GM12878 (cell line): ENCODE measurements at regions of chr7 and their contacts with region 1.

Region 1: GRCh38 chr7:121395961-121396757 is at the start of gene FAM3C:
- DNase-seq: peak; percentile 53
- ATAC-seq: peak; percentile 86
- H3K4me3 ChIP-seq: peak within 1 kb of the TSS; percentile 69
- H3K27ac ChIP-seq: peak within 1 kb of the TSS; percentile 66
- H3K4me1 ChIP-seq: peaks cover 8% of the 10 kb centered on the region
- H3K27me3 ChIP-seq: no peaks in the 10 kb centered on the region
- CTCF ChIP-seq: peak; percentile 66 to 94 (median 80); a peak in 5 of 6 replicates
- EP300 ChIP-seq: no peak; a peak in 1 of 4 replicates
- POLR2A ChIP-seq: peak; percentile 94
- RAD21 ChIP-seq: peak; percentile 77
- polyA plus RNA-seq, gene FAM3C: 11.0 to 13.6 TPM

Region 2: DNA sequence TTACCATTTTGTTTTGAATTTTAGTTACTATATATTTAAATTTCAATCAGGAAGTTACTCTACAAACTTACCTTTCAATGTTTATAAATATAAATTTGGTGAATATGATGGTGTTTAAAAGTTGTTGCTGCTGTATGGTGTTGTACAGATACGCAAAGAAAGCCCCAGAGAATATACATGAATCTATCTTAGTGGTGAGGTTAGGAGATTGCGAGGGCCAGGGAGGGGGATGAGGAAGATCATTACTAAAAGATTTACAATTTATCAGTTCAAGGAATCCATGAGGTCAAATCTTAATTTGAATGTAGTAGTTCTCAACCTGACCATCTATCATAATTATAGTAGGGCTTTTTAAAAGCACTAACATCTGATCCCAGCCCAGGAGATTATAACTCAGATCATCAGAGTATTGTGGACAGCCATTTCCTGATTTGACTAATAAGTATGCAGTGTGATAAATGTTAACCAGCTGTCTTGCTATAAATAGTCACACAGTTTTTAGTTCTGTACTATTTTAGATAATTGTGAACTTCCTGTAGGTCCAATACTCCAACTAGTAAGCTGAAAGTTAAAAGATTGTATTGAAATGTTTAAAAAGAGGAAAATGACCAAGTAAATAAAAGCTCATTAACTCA is 23.7 kb before region 1 on chr7:
- CTCF ChIA-PET with region 1: interaction called, 166 read pairs
- POLR2A ChIA-PET with region 1: interaction called, 52 read pairs
- RAD21 ChIA-PET with region 1: interaction called, 272 read pairs
- SMC1A ChIA-PET with region 1: interaction called, 281 read pairs
- in situ Hi-C with region 1: no loop called
- intact Hi-C with region 1: loop called (anchors 1 kb)
- DNase-seq: peak; percentile 73
- ATAC-seq: peak; percentile 88
- H3K4me3 ChIP-seq: no peak overlapping the region
- H3K27ac ChIP-seq: peak overlapping the region; percentile 58
- H3K4me1 ChIP-seq: peaks cover 32% of the 10 kb centered on the region
- H3K27me3 ChIP-seq: no peaks in the 10 kb centered on the region
- CTCF ChIP-seq: no peak
- EP300 ChIP-seq: peak; percentile 37 to 91; a peak in 3 of 4 replicates
- POLR2A ChIP-seq: no peak
- RAD21 ChIP-seq: 0 out of 2 replicates have a peak, but pooled peaks have one; percentile 6

Region 3: DNA sequence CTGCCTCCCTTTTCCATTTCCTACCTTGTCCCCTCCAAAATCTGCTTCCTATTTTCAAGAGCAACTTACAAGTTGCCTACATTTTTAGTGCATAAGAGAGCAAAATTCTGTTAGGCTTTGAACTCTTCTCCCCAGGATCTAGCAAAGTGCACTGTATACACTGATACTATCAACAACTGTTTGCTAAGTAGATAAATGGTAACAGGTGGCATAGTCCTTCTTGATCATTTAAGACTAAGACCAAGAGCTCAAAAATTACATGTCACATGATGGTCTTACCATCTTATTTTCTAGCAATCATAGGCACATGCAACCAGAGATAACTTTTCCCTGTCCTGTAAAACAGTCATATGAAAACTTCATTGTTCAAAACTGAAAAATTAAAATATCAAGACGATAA is 16.2 kb before region 1 on chr7:
- CTCF ChIA-PET with region 1: interaction called, 87 read pairs
- POLR2A ChIA-PET with region 1: interaction called, 52 read pairs
- RAD21 ChIA-PET with region 1: interaction called, 272 read pairs
- SMC1A ChIA-PET with region 1: interaction called, 281 read pairs
- in situ Hi-C with region 1: no loop called
- intact Hi-C with region 1: no loop called
- DNase-seq: no peak
- ATAC-seq: no peak
- H3K4me3 ChIP-seq: no peak overlapping the region
- H3K27ac ChIP-seq: no peak overlapping the region
- H3K4me1 ChIP-seq: peaks cover 25% of the 10 kb centered on the region
- H3K27me3 ChIP-seq: no peaks in the 10 kb centered on the region
- CTCF ChIP-seq: no peak
- EP300 ChIP-seq: no peak
- POLR2A ChIP-seq: no peak
- RAD21 ChIP-seq: no peak

Region 4: GRCh38 chr7:121385800-121386179 is 10.4 kb before region 1 on chr7:
- CTCF ChIA-PET with region 1: interaction called, 72 read pairs
- POLR2A ChIA-PET with region 1: interaction called, 50 read pairs
- RAD21 ChIA-PET with region 1: interaction called, 115 read pairs
- SMC1A ChIA-PET with region 1: interaction called, 103 read pairs
- in situ Hi-C with region 1: no loop called
- intact Hi-C with region 1: no loop called
- DNase-seq: peak; percentile 76
- ATAC-seq: peak; percentile 79
- H3K4me3 ChIP-seq: no peak overlapping the region
- H3K27ac ChIP-seq: peak overlapping the region; percentile 92
- H3K4me1 ChIP-seq: peaks cover 43% of the 10 kb centered on the region
- H3K27me3 ChIP-seq: no peaks in the 10 kb centered on the region
- CTCF ChIP-seq: no peak
- EP300 ChIP-seq: peak; percentile 87 to 94; a peak in 3 of 4 replicates
- POLR2A ChIP-seq: no peak
- RAD21 ChIP-seq: no peak

Region 5: GRCh38 chr7:121410829-121411596 is 14.9 kb after region 1 on chr7:
- CTCF ChIA-PET with region 1: interaction called, 15 read pairs
- POLR2A ChIA-PET with region 1: interaction called, 4 read pairs
- RAD21 ChIA-PET with region 1: interaction called, 4 read pairs
- SMC1A ChIA-PET with region 1: interaction called, 11 read pairs
- in situ Hi-C with region 1: no loop called
- intact Hi-C with region 1: no loop called
- DNase-seq: no peak
- ATAC-seq: peak; percentile 79
- H3K4me3 ChIP-seq: no peak overlapping the region
- H3K27ac ChIP-seq: no peak overlapping the region
- H3K4me1 ChIP-seq: no peaks in the 10 kb centered on the region
- H3K27me3 ChIP-seq: no peaks in the 10 kb centered on the region
- CTCF ChIP-seq: no peak
- EP300 ChIP-seq: no peak
- POLR2A ChIP-seq: no peak
- RAD21 ChIP-seq: no peak

Region 6: GRCh38 chr7:121440857-121441503 is 44.8 kb after region 1 on chr7:
- CTCF ChIA-PET with region 1: interaction called, 13 read pairs
- POLR2A ChIA-PET with region 1: interaction called, 6 read pairs
- RAD21 ChIA-PET with region 1: interaction called, 22 read pairs
- SMC1A ChIA-PET with region 1: interaction called, 28 read pairs
- in situ Hi-C with region 1: no loop called
- intact Hi-C with region 1: loop called (anchors 2 kb)
- DNase-seq: no peak
- ATAC-seq: peak; percentile 43
- H3K4me3 ChIP-seq: peak overlapping the region; percentile 31; the same call in 1 of the 2 replicates
- H3K27ac ChIP-seq: peak overlapping the region; percentile 58
- H3K4me1 ChIP-seq: 0 out of 2 replicates have a peak, but pooled peaks cover 7% of the 10 kb centered on the region
- H3K27me3 ChIP-seq: no peaks in the 10 kb centered on the region
- CTCF ChIP-seq: no peak
- EP300 ChIP-seq: no peak
- POLR2A ChIP-seq: no peak
- RAD21 ChIP-seq: no peak

Region 7: GRCh38 chr7:122006687-122007086 is 610.5 kb after region 1 on chr7:
- CTCF ChIA-PET with region 1: no interaction called
- POLR2A ChIA-PET with region 1: no interaction called
- RAD21 ChIA-PET with region 1: no interaction called
- SMC1A ChIA-PET with region 1: no interaction called
- in situ Hi-C with region 1: no loop called
- intact Hi-C with region 1: no loop called
- DNase-seq: no peak
- ATAC-seq: no peak
- H3K4me3 ChIP-seq: no peak overlapping the region
- H3K27ac ChIP-seq: no peak overlapping the region
- H3K4me1 ChIP-seq: no peaks in the 10 kb centered on the region
- H3K27me3 ChIP-seq: no peaks in the 10 kb centered on the region
- CTCF ChIP-seq: no peak
- EP300 ChIP-seq: no peak
- POLR2A ChIP-seq: no peak
- RAD21 ChIP-seq: no peak